ENCODE measurements at regions of chr1 and their contacts with region 1.

Region 1: DNA sequence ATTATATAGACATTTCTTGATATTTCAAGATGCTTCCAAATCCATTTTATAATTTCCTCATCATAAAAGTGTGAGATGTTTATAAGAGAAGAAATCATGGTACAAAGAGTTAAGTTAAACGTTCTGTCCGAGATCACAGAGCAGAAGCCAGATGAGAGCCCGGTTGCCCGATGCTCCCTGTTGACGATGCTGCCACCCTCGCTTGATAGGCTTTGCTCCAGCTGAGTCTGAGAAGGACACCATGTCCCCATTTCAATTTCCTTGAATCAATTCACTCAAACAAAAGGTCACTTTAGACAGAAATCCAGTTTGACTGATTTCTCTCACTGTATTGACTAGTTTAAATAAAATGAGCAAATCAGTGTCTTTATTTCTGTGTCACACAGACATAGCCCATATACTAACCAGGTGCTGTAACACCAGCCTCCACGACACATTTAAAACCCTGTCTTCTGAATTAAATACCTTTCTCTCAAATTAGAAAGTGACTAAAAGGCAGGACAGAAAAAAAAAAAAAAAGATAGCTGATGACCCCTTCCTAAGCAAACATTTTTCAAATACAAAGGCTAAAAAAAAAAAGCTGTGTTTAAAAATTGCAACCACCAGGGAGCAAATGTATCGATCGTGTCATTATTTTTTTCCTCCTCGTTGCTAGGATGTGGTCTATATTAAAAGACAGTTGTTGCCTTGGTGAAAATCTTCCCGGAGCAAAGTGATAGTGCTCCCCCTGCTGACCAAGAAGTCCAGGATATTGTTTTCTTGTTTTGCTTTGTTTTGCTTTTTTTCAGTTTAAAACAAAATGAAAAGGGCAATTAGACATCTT is 35.2 kb downstream of the DNASE2B start:
- DNase-seq: peak; percentile 67 to 83 (median 81)
- H3K4me3 ChIP-seq: peak overlapping the region in 1 of 2 donors; percentile 20
- H3K4me3 Mint-ChIP-seq: peak overlapping the region; percentile 65 to 82 (median 76)
- H3K27ac ChIP-seq: peak overlapping the region; percentile 54
- H3K27ac Mint-ChIP-seq: peak overlapping the region in 1 of 7 donors; percentile 88
- H3K4me1 ChIP-seq: peaks cover 36% of the 10 kb centered on the region
- H3K4me1 Mint-ChIP-seq: peaks cover 8 to 15% (median 12%) of the 10 kb centered on the region in 4 donors
- H3K27me3 ChIP-seq: no peaks in the 10 kb centered on the region
- H3K27me3 Mint-ChIP-seq: no peaks in the 10 kb centered on the region

Region 2: GRCh38 chr1:83905315-83905907 is 528.1 kb before region 1 on chr1:
- CTCF ChIA-PET with region 1: no interaction called
- POLR2A ChIA-PET with region 1: no interaction called
- intact Hi-C with region 1: loop called (anchors 5 kb)
- DNase-seq: peak in 4 of 5 donors; percentile 8 to 28 (median 16)
- H3K4me3 ChIP-seq: no peak overlapping the region
- H3K4me3 Mint-ChIP-seq: no peak overlapping the region
- H3K27ac ChIP-seq: no peak overlapping the region
- H3K27ac Mint-ChIP-seq: no peak overlapping the region
- H3K4me1 ChIP-seq: no peaks in the 10 kb centered on the region
- H3K4me1 Mint-ChIP-seq: no peaks in the 10 kb centered on the region
- H3K27me3 ChIP-seq: no peaks in the 10 kb centered on the region
- H3K27me3 Mint-ChIP-seq: peaks cover 12 to 14% of the 10 kb centered on the region in 2 donors

Region 3: DNA sequence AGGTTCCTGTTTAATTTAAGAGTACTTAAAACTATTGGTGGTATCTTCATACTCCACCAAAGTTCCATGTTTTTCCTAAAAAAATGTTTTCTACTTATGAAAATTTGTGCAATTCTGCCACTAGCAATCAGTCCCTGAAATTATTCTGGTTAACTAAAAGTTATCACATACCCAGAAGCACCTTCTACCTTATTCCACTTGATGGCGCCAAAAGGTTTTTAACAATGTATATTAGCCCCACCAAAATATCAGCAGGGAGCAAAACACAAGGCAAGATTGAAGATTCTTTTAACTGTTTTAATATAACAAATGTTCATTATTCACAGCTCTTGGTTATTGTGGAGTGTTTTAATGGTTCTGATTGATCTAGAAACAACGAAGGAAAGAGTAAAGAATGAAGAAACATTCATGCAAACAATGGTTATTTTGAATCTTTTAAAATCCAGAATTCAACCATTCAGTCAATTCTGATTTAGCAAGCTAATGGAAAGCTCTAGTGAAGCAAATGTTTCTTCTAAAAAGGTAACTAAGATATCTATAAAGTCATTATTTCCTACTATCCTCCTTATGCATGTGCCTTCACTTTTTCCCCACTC is 501.7 kb before region 1 on chr1:
- CTCF ChIA-PET with region 1: no interaction called
- POLR2A ChIA-PET with region 1: no interaction called
- intact Hi-C with region 1: loop called (anchors 1 kb)
- DNase-seq: peak in 4 of 5 donors; percentile 36 to 47 (median 44)
- H3K4me3 ChIP-seq: no peak overlapping the region
- H3K4me3 Mint-ChIP-seq: no peak overlapping the region
- H3K27ac ChIP-seq: no peak overlapping the region
- H3K27ac Mint-ChIP-seq: no peak overlapping the region
- H3K4me1 ChIP-seq: no peaks in the 10 kb centered on the region
- H3K4me1 Mint-ChIP-seq: no peaks in the 10 kb centered on the region
- H3K27me3 ChIP-seq: no peaks in the 10 kb centered on the region
- H3K27me3 Mint-ChIP-seq: peaks cover 4 to 5% of the 10 kb centered on the region in 2 donors

Region 4: DNA sequence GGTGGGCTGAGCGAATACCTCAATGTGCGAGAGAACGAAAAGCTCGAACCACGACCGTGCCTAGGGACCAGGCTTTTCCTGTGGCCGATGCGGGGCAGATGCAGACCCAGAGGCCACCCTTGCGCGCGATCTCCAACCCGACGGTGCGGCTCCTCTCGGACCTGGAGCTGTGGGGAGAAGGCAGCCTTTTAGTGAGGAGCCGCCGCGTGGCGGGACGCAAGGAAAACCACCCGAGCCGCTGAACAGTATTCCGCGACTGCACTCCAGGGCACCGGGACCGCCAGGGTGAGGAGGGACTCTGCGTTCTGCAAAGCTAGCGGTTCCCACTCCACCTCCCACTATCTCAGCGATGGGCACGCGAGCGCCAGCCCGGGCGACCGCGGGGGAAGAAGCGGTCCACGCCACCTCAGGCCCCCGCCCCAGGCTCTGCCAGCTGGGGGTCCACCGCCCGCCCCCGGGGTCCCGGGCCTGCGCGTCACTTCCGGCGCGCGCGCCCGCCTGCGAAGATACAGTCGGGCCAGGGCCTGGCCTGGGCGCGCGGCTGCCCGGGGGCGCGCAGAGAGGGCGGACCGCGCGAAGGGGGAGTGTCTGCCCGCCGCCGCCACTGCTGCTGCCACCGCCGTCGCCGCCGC is 355.9 kb before region 1 on chr1:
- CTCF ChIA-PET with region 1: no interaction called
- POLR2A ChIA-PET with region 1: no interaction called
- intact Hi-C with region 1: loop called (anchors 2 kb)
- DNase-seq: peak; percentile 61 to 77 (median 70)
- H3K4me3 ChIP-seq: peak overlapping the region; percentile 60 to 70
- H3K4me3 Mint-ChIP-seq: peak overlapping the region; percentile 82 to 93 (median 90)
- H3K27ac ChIP-seq: peak overlapping the region; percentile 43
- H3K27ac Mint-ChIP-seq: peak overlapping the region in 6 of 7 donors; percentile 19 to 85 (median 76)
- H3K4me1 ChIP-seq: peaks cover 17% of the 10 kb centered on the region
- H3K4me1 Mint-ChIP-seq: peaks cover 7 to 16% (median 11%) of the 10 kb centered on the region in 4 donors
- H3K27me3 ChIP-seq: no peaks in the 10 kb centered on the region
- H3K27me3 Mint-ChIP-seq: peaks cover 0 to 8% of the 10 kb centered on the region in 2 donors

Region 5: DNA sequence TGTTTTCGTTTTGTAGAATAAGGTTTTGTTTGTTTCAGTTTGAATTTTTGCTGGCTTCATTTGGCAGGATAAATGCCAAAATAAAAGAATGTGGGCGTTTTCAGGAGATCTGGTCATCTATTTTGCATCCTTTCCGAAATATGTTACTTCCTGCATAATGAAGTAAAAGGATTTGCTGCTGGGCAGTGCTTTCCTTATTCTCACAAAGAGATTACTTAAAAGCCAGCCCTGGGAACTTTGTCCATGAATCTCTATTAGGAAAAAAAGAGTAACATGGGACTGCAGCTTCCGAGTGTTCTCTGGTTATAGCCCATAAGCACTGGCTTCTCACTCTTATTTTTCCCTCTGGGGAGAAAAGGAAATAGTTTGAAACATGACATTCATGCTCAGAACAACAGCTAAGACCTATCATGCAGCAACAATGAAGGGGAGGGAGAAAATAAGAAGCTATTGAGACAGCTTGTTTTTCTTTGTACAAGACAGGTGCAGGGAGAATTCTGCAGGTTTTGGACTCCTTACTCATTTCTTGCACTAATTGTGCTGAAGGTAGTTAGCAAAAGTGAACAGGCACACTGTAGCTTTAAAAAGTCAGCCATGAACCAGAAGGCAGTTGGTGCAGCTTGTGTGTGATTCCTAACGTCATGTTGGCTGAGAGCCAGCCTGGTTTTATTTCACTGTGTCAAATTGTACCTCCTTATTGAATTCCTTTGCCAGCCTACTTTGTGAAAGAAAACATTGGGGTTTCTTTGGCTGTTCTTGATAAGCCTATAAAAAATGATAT is 132.3 kb before region 1 on chr1 and contains the start of gene SAMD13:
- CTCF ChIA-PET with region 1: interaction called, 3 read pairs
- POLR2A ChIA-PET with region 1: no interaction called
- intact Hi-C with region 1: loop called (anchors 5 kb)
- DNase-seq: peak; percentile 37 to 51 (median 47)
- H3K4me3 ChIP-seq: no peak within 1 kb of the TSS
- H3K4me3 Mint-ChIP-seq: peak within 1 kb of the TSS in 7 of 8 donors; percentile 15 to 64 (median 33)
- H3K27ac ChIP-seq: no peak within 1 kb of the TSS
- H3K27ac Mint-ChIP-seq: no peak within 1 kb of the TSS
- H3K4me1 ChIP-seq: peaks cover 35% of the 10 kb centered on the region
- H3K4me1 Mint-ChIP-seq: peaks cover 13 to 40% (median 31%) of the 10 kb centered on the region in 4 donors
- H3K27me3 ChIP-seq: peaks cover 3% of the 10 kb centered on the region
- H3K27me3 Mint-ChIP-seq: peaks cover 4 to 17% of the 10 kb centered on the region in 2 donors
- total RNA-seq, gene SAMD13: not detected

Region 6: GRCh38 chr1:84398175-84399155 is 35.0 kb before region 1 on chr1 and contains the start of gene DNASE2B:
- CTCF ChIA-PET with region 1: no interaction called
- POLR2A ChIA-PET with region 1: no interaction called
- intact Hi-C with region 1: no loop called
- DNase-seq: no peak
- H3K4me3 ChIP-seq: no peak within 1 kb of the TSS
- H3K4me3 Mint-ChIP-seq: no peak within 1 kb of the TSS
- H3K27ac ChIP-seq: no peak within 1 kb of the TSS
- H3K27ac Mint-ChIP-seq: no peak within 1 kb of the TSS
- H3K4me1 ChIP-seq: no peaks in the 10 kb centered on the region
- H3K4me1 Mint-ChIP-seq: no peaks in the 10 kb centered on the region
- H3K27me3 ChIP-seq: no peaks in the 10 kb centered on the region
- H3K27me3 Mint-ChIP-seq: peaks cover 0 to 1% of the 10 kb centered on the region in 2 donors
- total RNA-seq, gene DNASE2B: not detected

Region 7: GRCh38 chr1:84467298-84467697 is 33.8 kb after region 1 on chr1:
- CTCF ChIA-PET with region 1: no interaction called
- POLR2A ChIA-PET with region 1: no interaction called
- intact Hi-C with region 1: no loop called
- DNase-seq: no peak
- H3K4me3 ChIP-seq: no peak overlapping the region
- H3K4me3 Mint-ChIP-seq: no peak overlapping the region
- H3K27ac ChIP-seq: no peak overlapping the region
- H3K27ac Mint-ChIP-seq: no peak overlapping the region
- H3K4me1 ChIP-seq: no peaks in the 10 kb centered on the region
- H3K4me1 Mint-ChIP-seq: no peaks in the 10 kb centered on the region
- H3K27me3 ChIP-seq: peaks cover 8% of the 10 kb centered on the region
- H3K27me3 Mint-ChIP-seq: peaks cover 33 to 40% of the 10 kb centered on the region in 2 donors

Region 8: GRCh38 chr1:84478876-84479868 is 45.7 kb after region 1 on chr1 and contains the start of gene RPF1:
- CTCF ChIA-PET with region 1: interaction called, 16 read pairs
- POLR2A ChIA-PET with region 1: no interaction called
- intact Hi-C with region 1: no loop called
- DNase-seq: peak; percentile 83 to 86 (median 85)
- H3K4me3 ChIP-seq: peak within 1 kb of the TSS; percentile 93
- H3K4me3 Mint-ChIP-seq: peak within 1 kb of the TSS; percentile 96 to 100 (median 99)
- H3K27ac ChIP-seq: peak within 1 kb of the TSS; percentile 65
- H3K27ac Mint-ChIP-seq: peak within 1 kb of the TSS; percentile 96 to 99 (median 98)
- H3K4me1 ChIP-seq: peaks cover 41% of the 10 kb centered on the region
- H3K4me1 Mint-ChIP-seq: peaks cover 31 to 54% (median 41%) of the 10 kb centered on the region in 4 donors
- H3K27me3 ChIP-seq: no peaks in the 10 kb centered on the region
- H3K27me3 Mint-ChIP-seq: peaks cover 13 to 21% of the 10 kb centered on the region in 2 donors
- total RNA-seq, gene RPF1: 41.7 to 46.2 TPM

Region 9: GRCh38 chr1:84573967-84574842 is 140.7 kb after region 1 on chr1 and contains the start of gene CTBS:
- CTCF ChIA-PET with region 1: interaction called, 7 read pairs
- POLR2A ChIA-PET with region 1: interaction called, 4 read pairs
- intact Hi-C with region 1: loop called (anchors 2 kb)
- DNase-seq: peak; percentile 80 to 84 (median 83)
- H3K4me3 ChIP-seq: peak within 1 kb of the TSS; percentile 78 to 97
- H3K4me3 Mint-ChIP-seq: peak within 1 kb of the TSS; percentile 96 to 99 (median 98)
- H3K27ac ChIP-seq: peak within 1 kb of the TSS; percentile 98
- H3K27ac Mint-ChIP-seq: peak within 1 kb of the TSS; percentile 99 to 100 (median 100)
- H3K4me1 ChIP-seq: peaks cover 37% of the 10 kb centered on the region
- H3K4me1 Mint-ChIP-seq: peaks cover 29 to 46% (median 39%) of the 10 kb centered on the region in 4 donors
- H3K27me3 ChIP-seq: no peaks in the 10 kb centered on the region
- H3K27me3 Mint-ChIP-seq: no peaks in the 10 kb centered on the region
- total RNA-seq, gene CTBS: 17.4 to 18.2 TPM

Measured in CD4-positive, alpha-beta memory T cell (primary cell).